ENCODE measurements at regions of chr15 and their contacts with region 1.

Region 1: DNA sequence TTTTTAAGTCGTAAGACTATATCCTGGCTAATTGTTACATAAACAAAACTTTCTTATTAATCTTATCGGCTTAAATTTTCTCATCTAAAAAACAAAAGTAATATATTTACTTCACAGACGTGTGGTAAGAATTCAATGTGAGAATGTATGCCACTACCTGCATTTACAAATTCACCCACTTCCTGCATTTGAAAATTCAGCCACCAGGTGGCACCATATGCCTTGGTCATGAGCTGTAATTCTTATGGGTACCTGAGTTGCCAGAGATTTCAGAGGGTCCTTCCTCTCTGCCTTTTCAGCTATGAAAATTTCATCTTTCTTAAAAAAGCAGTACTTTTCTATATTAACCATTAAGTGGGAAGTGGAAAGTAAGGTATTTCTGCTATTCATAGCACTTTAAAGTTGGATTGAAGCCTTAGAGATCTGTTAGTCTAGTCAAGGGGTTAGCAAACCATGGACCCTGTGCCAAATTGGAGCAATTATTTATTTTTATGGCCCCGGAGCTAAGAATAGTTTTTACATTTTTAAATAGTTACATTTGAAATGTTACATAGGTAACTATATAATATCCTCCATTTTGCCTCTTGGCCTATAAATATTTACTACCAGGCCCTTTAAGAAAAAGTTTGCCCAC is 127.8 kb downstream of the HCN4 start:
- DNase-seq: peak; percentile 56 to 72 (median 67)
- H3K4me3 ChIP-seq: no peak overlapping the region
- H3K4me3 Mint-ChIP-seq: no peak overlapping the region
- H3K27ac ChIP-seq: no peak overlapping the region
- H3K27ac Mint-ChIP-seq: no peak overlapping the region
- H3K4me1 ChIP-seq: no peaks in the 10 kb centered on the region
- H3K4me1 Mint-ChIP-seq: no peaks in the 10 kb centered on the region
- H3K27me3 ChIP-seq: no peaks in the 10 kb centered on the region
- H3K27me3 Mint-ChIP-seq: no peaks in the 10 kb centered on the region

Region 2: DNA sequence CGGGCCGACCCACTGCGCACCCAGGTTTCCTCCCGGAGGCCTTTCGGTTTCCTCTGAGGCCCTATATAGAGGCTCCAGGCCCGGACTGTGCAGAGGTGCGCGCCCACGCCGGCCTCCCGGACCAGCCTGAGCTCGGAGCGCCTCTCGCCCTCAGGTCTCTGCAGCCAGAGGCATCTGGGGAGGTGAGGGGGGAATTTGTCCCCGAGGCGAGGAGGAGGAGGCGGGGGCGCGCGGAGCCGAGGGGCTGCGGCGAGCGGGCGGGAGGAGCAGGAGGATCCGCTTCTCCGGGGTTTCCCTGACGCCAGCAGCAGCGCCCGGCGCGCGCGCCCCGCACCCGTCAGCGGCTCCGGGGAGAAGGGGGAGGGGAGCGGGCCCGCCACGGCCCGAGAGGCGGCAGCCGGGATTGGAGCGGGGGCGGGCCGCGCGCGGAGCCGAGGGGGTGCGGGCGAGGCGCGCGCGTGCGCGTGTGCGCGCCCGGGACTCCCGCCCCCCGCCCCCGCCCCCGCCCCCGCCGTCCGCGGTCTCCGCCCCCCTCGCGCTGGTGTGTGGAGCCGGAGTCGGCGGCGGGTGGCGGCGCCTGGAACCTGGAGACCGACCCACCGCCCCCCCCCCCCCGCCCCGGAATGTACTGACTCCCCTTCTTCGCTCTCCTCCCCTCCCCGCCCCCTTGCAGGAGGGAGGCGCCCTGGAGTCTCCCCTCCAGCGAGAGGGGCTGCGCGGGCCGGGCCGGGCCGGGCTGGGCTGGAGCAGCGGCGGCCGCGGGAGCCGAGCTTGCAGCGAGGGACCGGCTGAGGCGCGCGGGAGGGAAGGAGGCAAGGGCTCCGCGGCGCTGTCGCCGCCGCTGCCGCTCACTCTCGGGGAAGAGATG is 188.9 kb before region 1 on chr15 and contains the start of gene NEO1:
- CTCF ChIA-PET with region 1: interaction called, 3 read pairs
- POLR2A ChIA-PET with region 1: no interaction called
- intact Hi-C with region 1: loop called (anchors 5 kb)
- DNase-seq: peak; percentile 87 to 89 (median 87)
- H3K4me3 ChIP-seq: peak within 1 kb of the TSS; percentile 31 to 67
- H3K4me3 Mint-ChIP-seq: peak within 1 kb of the TSS; percentile 87 to 91 (median 90)
- H3K27ac ChIP-seq: peak within 1 kb of the TSS; percentile 73
- H3K27ac Mint-ChIP-seq: peak within 1 kb of the TSS; percentile 74 to 93 (median 84)
- H3K4me1 ChIP-seq: peaks cover 11% of the 10 kb centered on the region
- H3K4me1 Mint-ChIP-seq: peaks cover 9 to 14% (median 11%) of the 10 kb centered on the region in 4 donors
- H3K27me3 ChIP-seq: no peaks in the 10 kb centered on the region
- H3K27me3 Mint-ChIP-seq: no peaks in the 10 kb centered on the region
- total RNA-seq, gene NEO1: 11.3 to 15.7 TPM

Region 3: GRCh38 chr15:73127301-73127936 is 113.6 kb before region 1 on chr15:
- CTCF ChIA-PET with region 1: no interaction called
- POLR2A ChIA-PET with region 1: no interaction called
- intact Hi-C with region 1: loop called (anchors 1 kb)
- DNase-seq: peak in 4 of 5 donors; percentile 8 to 36 (median 20)
- H3K4me3 ChIP-seq: no peak overlapping the region
- H3K4me3 Mint-ChIP-seq: no peak overlapping the region
- H3K27ac ChIP-seq: no peak overlapping the region
- H3K27ac Mint-ChIP-seq: peak overlapping the region in 1 of 7 donors; percentile 50
- H3K4me1 ChIP-seq: no peaks in the 10 kb centered on the region
- H3K4me1 Mint-ChIP-seq: peaks cover 0 to 2% (median under 1%) of the 10 kb centered on the region in 4 donors
- H3K27me3 ChIP-seq: no peaks in the 10 kb centered on the region
- H3K27me3 Mint-ChIP-seq: no peaks in the 10 kb centered on the region

Region 4: DNA sequence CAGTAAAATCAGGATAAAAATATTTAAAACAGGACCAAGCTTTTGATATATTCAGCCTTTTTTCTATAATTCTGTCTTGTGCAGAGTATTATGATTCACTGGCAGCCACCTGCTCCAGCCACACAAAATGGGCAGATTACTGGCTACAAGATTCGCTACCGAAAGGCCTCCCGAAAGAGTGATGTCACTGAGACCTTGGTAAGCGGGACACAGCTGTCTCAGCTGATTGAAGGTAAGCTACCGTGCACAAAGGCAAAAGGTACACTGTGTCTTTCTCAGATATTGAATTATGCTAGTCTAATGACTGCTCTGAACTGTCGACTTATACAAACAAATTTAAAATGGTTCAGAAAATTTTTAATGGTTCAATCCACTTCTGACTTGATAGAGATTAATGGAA is 13.6 kb after region 1 on chr15:
- CTCF ChIA-PET with region 1: interaction called, 16 read pairs
- POLR2A ChIA-PET with region 1: no interaction called
- intact Hi-C with region 1: no loop called
- DNase-seq: no peak
- H3K4me3 ChIP-seq: no peak overlapping the region
- H3K4me3 Mint-ChIP-seq: no peak overlapping the region
- H3K27ac ChIP-seq: no peak overlapping the region
- H3K27ac Mint-ChIP-seq: no peak overlapping the region
- H3K4me1 ChIP-seq: no peaks in the 10 kb centered on the region
- H3K4me1 Mint-ChIP-seq: peaks cover 0 to 5% (median 2%) of the 10 kb centered on the region in 4 donors
- H3K27me3 ChIP-seq: no peaks in the 10 kb centered on the region
- H3K27me3 Mint-ChIP-seq: no peaks in the 10 kb centered on the region

Region 5: DNA sequence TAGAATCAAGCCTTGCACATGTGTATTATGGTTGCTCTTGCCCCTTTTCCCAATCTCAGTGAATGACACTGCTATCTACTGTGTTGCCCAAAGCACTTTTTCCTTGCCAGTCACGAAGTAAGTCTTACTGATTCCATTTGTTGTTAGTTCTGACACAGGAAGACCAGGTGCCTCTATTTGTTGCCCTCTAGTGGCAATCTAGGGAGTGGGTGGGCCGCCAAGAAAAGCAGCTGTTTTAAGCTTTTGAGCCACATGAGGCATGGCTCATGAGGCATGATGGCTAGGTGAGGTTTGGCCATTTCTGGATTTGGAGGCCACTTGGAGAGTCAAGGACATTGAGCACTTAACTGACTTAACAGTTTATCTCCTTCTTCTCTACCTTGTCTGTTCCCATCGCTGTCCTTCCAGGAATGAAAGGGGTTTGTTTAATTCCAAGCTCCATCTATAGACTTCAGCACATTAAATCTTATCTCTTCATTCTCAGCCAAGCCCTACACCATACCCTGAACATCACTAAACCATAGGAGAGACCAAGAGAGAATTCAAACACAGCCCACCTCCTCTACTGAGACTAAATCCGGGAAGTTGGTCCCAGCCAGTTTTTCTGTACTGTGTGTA is 24.7 kb after region 1 on chr15:
- CTCF ChIA-PET with region 1: interaction called, 91 read pairs
- POLR2A ChIA-PET with region 1: no interaction called
- intact Hi-C with region 1: loop called (anchors 2 kb)
- DNase-seq: peak; percentile 38 to 56 (median 44)
- H3K4me3 ChIP-seq: no peak overlapping the region
- H3K4me3 Mint-ChIP-seq: no peak overlapping the region
- H3K27ac ChIP-seq: no peak overlapping the region
- H3K27ac Mint-ChIP-seq: peak overlapping the region in 1 of 7 donors; percentile 69
- H3K4me1 ChIP-seq: no peaks in the 10 kb centered on the region
- H3K4me1 Mint-ChIP-seq: peaks cover 0 to 9% (median 7%) of the 10 kb centered on the region in 4 donors
- H3K27me3 ChIP-seq: no peaks in the 10 kb centered on the region
- H3K27me3 Mint-ChIP-seq: no peaks in the 10 kb centered on the region

Region 6: DNA sequence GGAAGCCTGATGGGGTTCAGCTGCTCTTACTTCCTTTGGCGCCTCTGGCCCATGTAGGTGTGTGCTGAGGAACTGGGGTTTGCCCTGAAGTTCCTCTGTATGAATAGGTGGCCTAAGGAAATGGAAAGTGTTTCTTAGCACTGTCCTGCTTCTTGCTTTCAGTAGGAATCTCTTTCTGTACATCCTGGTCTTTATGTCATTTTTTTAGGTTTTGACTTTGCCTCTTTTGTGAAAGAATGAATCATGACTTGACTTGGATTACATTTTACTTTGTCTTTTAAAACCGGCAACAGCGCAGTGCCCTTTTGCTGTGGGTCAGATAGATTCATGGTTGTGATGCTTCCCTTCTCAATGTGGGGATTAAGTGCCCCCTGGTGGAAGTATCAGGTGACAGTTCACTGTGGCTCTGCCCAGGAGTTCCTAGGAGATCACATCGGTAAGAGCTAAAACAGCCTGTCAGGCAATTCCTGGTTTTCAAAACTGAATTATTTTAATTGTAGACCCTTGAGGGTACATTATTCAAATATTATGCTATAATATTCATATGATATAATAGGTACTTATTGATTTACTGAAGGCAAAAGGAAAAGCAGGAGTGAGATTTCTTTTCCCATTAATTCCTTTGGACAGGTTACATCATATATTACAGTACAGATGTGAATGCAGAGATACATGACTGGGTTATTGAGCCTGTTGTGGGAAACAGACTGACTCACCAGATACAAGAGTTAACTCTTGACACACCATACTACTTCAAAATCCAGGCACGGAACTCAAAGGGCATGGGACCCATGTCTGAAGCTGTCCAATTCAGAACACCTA is 32.4 kb after region 1 on chr15:
- CTCF ChIA-PET with region 1: interaction called, 54 read pairs
- POLR2A ChIA-PET with region 1: no interaction called
- intact Hi-C with region 1: loop called (anchors 1 kb)
- DNase-seq: peak; percentile 37 to 50 (median 43)
- H3K4me3 ChIP-seq: no peak overlapping the region
- H3K4me3 Mint-ChIP-seq: peak overlapping the region in 4 of 8 donors; percentile 6 to 76 (median 32)
- H3K27ac ChIP-seq: no peak overlapping the region
- H3K27ac Mint-ChIP-seq: peak overlapping the region in 1 of 7 donors; percentile 67
- H3K4me1 ChIP-seq: no peaks in the 10 kb centered on the region
- H3K4me1 Mint-ChIP-seq: peaks cover 0 to 5% (median 3%) of the 10 kb centered on the region in 4 donors
- H3K27me3 ChIP-seq: no peaks in the 10 kb centered on the region
- H3K27me3 Mint-ChIP-seq: no peaks in the 10 kb centered on the region

Measured in CD4-positive, alpha-beta memory T cell (primary cell).